ENCODE measurements at regions of chr6 and their contacts with region 1.

Region 1: GRCh38 chr6:107847844-107848802 is 24.0 kb upstream of the SCML4 start:
- DNase-seq: peak; percentile 67
- H3K4me3 Mint-ChIP-seq: peak overlapping the region; percentile 69
- H3K27ac Mint-ChIP-seq: no peak overlapping the region
- H3K4me1 Mint-ChIP-seq: peaks cover 18% of the 10 kb centered on the region
- H3K27me3 Mint-ChIP-seq: peaks cover 13% of the 10 kb centered on the region

Region 2: DNA sequence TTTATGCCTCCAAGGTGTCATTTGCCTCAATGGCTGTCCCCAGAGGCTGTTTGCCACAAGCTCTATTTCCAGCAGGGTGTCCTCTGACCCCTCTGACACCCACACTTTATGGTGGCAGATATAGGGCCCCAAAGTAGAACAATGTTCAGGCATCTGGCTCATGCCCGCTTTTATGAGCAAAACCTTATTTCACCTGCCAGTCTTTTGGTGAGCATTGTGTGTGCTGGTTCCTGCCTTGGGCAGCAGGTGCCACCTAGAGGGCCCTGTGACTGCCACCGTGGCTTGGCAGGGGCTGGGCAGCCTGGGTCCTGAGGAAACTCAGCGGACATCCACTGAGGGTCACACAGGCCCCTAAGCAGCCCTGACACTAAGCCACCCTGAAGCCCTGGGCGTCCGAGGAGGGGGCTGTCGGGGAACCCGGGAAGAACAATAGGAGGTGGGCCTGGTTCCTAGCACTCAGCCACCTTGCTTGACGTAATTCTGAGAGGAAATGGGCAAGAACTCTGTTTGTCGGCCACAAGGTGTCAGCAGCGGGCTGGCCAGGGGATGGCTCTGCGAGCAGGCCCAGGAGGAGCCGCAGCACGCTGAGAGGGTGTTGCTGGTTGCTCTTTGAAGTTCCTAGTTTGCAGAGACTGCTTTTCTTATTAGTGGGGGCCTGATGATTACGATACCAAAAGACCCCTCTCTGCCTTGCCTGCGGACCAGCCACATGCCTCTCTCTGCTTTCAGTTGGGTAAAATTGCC is 173.0 kb before region 1 on chr6:
- intact Hi-C with region 1: loop called (anchors 1 kb)
- DNase-seq: peak; percentile 78
- H3K4me3 Mint-ChIP-seq: no peak overlapping the region
- H3K27ac Mint-ChIP-seq: no peak overlapping the region
- H3K4me1 Mint-ChIP-seq: peaks cover 21% of the 10 kb centered on the region
- H3K27me3 Mint-ChIP-seq: peaks cover 17% of the 10 kb centered on the region

Region 3: DNA sequence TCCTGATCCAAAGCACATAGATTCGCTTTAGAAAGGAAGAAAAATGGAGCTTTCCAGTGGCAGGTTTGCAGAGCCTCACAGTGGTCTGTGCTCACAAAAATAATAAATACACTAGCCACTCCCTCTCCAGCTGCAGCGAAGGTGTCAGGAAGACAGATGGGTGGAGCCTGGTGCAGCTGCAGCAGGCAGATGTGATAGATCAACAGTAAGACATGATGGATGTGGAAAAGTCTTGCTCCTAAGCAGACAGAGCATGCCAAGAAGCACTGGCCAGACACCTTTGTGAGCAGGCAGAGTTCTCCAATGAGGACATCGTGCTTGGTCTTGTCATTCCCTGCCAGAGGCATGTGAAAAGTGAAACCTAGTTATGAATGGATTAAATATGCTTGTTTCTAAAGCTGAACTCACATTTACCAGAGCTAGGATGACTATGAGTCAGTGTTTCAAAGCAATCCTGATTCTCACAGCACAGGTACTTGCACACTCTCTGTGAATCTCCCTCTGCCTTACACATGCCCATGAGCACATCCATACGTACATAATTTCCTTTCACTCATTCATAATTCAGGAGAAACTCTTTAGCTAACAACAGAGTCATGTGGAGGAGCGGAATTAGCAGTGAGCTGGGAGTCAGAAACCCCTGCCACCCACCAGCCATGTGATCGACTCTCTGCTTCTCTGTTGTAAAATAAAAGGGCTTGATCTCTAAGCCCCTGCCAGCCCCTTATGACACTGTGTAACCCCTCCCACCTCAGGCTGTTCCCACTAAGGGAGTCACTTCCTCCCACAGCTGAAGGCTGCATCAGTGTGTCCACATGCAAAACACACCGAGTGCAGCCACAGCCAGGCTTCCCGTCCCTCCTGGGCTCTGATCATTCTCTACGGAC is 135.2 kb before region 1 on chr6:
- intact Hi-C with region 1: loop called (anchors 1 kb)
- DNase-seq: no peak
- H3K4me3 Mint-ChIP-seq: peak overlapping the region; percentile 34
- H3K27ac Mint-ChIP-seq: peak overlapping the region; percentile 64
- H3K4me1 Mint-ChIP-seq: peaks cover 43% of the 10 kb centered on the region
- H3K27me3 Mint-ChIP-seq: peaks cover 13% of the 10 kb centered on the region

Region 4: GRCh38 chr6:107731422-107732319 is 116.5 kb before region 1 on chr6:
- intact Hi-C with region 1: loop called (anchors 5 kb)
- DNase-seq: no peak
- H3K4me3 Mint-ChIP-seq: peak overlapping the region; percentile 68
- H3K27ac Mint-ChIP-seq: no peak overlapping the region
- H3K4me1 Mint-ChIP-seq: peaks cover 48% of the 10 kb centered on the region
- H3K27me3 Mint-ChIP-seq: peaks cover 37% of the 10 kb centered on the region

Region 5: DNA sequence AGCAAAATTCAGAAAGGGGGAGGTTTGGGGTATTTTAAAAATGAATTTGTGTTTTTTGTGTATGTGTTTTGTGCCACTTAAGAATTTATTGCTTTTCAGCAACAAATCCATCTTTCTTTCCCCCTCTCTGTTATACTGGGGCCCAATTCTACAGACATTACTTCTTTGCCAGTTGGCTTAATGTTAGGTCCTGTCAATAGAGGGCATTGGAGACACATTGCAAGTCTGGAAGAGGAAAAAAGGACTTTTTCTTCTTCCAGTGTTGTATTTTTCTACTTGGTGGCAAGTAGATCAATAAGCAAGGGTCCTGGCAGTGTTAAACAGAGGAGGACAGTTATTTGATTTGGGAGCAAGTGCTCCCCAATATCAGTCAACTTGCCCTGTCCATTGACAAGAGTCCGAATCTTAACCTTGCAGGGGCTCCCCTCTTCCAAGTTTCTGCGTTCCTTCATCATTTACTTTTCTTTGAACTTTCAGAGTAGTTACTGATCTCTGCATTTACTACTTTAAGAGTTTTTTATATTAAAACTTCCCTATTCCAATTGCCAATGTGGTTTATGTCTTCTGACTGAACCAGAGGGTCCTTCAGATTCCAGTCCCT is 47.5 kb before region 1 on chr6:
- intact Hi-C with region 1: loop called (anchors 1 kb)
- DNase-seq: no peak
- H3K4me3 Mint-ChIP-seq: no peak overlapping the region
- H3K27ac Mint-ChIP-seq: no peak overlapping the region
- H3K4me1 Mint-ChIP-seq: peaks cover 12% of the 10 kb centered on the region
- H3K27me3 Mint-ChIP-seq: peaks cover 20% of the 10 kb centered on the region

Region 6: DNA sequence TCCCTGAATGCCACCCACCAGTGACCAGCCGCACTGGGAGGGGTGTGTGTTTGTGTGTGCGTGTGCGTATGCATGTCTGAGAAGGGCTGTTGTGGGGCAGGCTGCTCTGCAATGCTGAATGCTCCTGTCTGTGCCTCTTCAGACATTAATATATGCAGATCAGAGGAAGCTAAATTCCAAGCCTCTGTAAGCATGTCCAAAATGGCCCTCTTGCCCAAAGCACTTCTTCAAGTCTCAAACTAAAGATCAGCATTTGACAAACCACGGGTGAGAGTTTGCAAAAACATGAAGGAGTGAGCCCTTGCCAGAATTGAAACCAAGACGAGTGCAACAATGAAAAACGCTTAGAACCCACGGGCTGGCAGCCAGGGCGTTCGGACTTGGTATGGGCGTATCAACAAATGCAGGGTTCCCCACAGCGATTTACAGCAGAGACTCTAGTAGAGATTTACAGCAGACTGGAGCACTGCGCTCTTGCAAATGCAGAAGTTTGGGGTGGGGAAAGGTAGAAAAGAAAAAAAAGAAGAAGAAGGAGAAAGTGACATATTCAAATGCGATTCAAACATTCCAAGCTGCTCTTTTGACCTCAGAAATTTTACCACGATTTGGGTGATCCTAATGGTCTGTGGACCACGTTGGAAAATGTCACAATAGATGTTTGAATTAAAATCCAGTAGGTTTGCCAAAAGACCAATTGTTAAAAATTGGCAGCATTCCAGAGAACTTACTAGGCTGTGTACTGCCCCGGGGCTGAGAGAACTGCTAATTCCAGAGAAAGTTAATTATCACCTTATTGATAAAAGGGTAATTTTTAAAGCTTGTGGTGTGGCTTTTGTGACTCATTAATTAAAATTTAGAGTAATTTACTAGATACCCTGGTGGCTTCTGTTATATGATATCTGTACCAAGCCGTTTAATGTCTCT is 27.5 kb before region 1 on chr6:
- intact Hi-C with region 1: loop called (anchors 2 kb)
- DNase-seq: peak; percentile 26
- H3K4me3 Mint-ChIP-seq: peak overlapping the region; percentile 84
- H3K27ac Mint-ChIP-seq: peak overlapping the region; percentile 86
- H3K4me1 Mint-ChIP-seq: peaks cover 75% of the 10 kb centered on the region
- H3K27me3 Mint-ChIP-seq: no peaks in the 10 kb centered on the region

Region 7: DNA sequence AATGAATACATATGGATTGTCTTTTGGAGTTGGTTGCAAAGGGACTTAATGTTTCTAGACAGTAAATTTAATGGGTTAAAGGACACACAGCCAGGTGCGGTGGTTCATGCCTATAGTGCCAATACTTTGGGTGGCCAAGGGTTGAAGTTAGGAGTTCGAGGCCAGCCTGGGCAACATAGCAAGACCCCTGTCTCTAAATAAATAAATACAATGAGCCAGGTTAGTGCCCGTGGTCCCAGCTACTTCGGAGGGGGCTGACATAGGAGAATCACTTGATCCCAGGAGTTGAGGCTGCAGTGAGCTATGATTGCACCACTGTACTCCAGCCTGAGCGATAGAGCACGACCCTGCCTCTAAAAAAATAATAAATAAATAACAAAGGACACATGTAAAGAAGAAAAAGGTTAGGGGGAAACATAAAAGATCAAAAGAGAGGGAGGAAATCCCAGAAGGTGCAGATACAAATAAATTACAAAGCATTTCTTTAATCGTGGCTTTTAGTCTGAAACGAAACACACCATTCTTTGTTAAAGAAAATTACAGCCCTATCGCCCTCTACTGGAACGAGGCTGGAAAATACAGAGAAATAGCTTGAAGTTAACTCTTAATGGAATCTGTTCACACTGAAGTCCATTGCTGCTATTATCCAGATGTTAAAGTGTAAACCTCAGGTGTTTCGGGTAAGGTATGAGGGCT is 18.6 kb after region 1 on chr6:
- intact Hi-C with region 1: loop called (anchors 1 kb)
- DNase-seq: no peak
- H3K4me3 Mint-ChIP-seq: no peak overlapping the region
- H3K27ac Mint-ChIP-seq: no peak overlapping the region
- H3K4me1 Mint-ChIP-seq: peaks cover 12% of the 10 kb centered on the region
- H3K27me3 Mint-ChIP-seq: peaks cover 6% of the 10 kb centered on the region

Region 8: DNA sequence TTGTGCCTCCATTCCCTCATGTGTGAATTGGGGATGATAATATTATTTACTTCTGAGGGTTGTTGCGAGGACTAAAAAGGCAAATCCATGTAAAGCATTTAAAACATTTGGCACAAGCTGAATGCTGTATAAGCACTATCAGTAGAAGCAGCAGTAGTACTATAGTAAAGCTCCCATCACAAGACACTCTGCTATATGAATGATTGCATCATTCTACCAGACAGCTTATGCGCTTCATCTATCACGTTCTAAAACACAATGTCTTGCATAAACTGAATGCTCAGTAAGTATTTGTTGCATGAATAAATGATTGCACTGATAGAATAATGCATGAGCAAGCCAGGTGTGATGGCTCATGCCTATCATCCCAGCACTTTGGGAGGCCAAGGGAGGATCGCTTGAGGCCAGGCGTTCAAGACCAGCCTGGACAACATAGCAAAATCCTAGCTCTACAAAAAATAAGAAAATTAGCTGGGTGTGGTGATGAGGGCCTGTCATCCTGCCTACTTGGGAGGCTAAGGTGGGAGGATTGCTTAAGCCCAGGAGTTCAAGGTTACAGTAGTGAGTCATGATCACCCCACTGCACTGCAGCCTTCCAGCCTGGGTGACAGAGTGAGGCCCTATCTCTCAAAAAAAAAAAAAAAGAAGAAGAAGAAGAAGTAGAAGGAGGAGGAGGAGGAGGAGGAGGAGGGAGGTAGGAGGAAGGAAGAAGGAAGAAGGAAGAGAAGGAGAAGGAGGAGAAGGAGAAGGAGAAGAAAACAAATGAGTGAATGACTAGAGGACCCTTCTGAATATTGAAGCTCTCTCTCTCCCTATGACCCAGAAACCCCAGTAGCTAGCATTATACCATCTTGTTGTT is 662.6 kb after region 1 on chr6:
- intact Hi-C with region 1: no loop called
- DNase-seq: no peak
- H3K4me3 Mint-ChIP-seq: no peak overlapping the region
- H3K27ac Mint-ChIP-seq: no peak overlapping the region
- H3K4me1 Mint-ChIP-seq: no peaks in the 10 kb centered on the region
- H3K27me3 Mint-ChIP-seq: peaks cover 5% of the 10 kb centered on the region

Measured in activated T-helper 2 cell treated with anti-CD3 and anti-CD28 coated beads, Interferon-gamma antibody, Interleukin-2, Interleukin-4, amounts not matched to agents 10 μg/mL and 5 μg/mL and 100 μg/mL, durations not matched to agents 14 hours and 24 hours and 36 hours (primary cell).